Aorta (tissue), 5 donors: ENCODE measurements at regions of chr19 and their contacts with region 1.

Region 1: GRCh38 chr19:13952154-13953035 is at the start of gene DCAF15:
- DNase-seq: peak; percentile 99 to 100
- ATAC-seq: peak; percentile 99
- H3K4me3 ChIP-seq: peak within 1 kb of the TSS; percentile 88 to 92
- H3K27ac ChIP-seq: peak within 1 kb of the TSS in 1 of 2 donors; percentile 49
- H3K4me1 ChIP-seq: no peaks in the 10 kb centered on the region
- H3K27me3 ChIP-seq: no peaks in the 10 kb centered on the region
- total RNA-seq, gene DCAF15: 21.8 to 25.3 TPM

Region 2: DNA sequence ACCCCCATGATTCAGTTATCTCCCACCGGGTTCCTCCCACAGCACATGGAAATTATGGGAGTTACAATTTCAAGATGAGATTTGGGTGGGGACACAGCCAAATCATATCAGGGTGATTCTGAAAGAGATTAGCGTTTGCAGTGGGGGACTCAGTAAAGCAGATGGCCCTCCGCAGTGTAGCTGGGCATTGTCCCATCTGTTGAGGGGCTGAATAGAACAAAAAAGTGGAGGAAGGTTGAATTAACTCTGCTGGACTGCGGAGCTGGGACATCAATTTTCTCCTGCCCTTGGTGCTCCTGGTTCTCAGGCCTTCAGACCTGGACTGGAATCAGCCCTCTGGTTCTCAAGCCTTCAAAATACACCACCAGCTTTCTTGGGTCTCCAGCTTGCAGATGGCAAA is 390.9 kb before region 1 on chr19:
- intact Hi-C with region 1: no loop called
- DNase-seq: no peak
- ATAC-seq: no peak
- H3K4me3 ChIP-seq: no peak overlapping the region
- H3K27ac ChIP-seq: no peak overlapping the region
- H3K4me1 ChIP-seq: no peaks in the 10 kb centered on the region
- H3K27me3 ChIP-seq: peaks cover 0 to 2% of the 10 kb centered on the region in 2 donors

Region 3: DNA sequence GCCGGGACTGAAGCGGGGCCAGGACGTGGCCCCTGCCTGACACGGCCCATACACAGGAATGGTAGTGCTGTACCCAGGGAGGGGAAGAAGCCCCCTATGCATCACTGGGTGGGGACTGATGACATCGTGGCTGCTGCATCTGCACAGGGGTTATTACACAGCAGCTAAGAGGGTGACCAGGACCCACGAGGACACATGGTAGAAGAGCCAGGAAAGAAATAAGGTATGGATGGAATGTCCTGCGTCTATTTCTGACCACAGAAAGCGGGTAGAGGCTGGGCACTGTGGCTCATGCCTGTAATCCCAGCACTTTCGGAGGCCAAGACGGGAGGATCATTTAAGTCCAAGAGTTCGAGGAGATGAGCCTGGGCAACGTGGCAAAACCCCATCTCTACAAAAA is 24.1 kb after region 1 on chr19:
- intact Hi-C with region 1: loop called in 1 of 2 experiments (anchors 2 kb)
- DNase-seq: no peak
- ATAC-seq: no peak
- H3K4me3 ChIP-seq: no peak overlapping the region
- H3K27ac ChIP-seq: no peak overlapping the region
- H3K4me1 ChIP-seq: no peaks in the 10 kb centered on the region
- H3K27me3 ChIP-seq: no peaks in the 10 kb centered on the region

Region 4: DNA sequence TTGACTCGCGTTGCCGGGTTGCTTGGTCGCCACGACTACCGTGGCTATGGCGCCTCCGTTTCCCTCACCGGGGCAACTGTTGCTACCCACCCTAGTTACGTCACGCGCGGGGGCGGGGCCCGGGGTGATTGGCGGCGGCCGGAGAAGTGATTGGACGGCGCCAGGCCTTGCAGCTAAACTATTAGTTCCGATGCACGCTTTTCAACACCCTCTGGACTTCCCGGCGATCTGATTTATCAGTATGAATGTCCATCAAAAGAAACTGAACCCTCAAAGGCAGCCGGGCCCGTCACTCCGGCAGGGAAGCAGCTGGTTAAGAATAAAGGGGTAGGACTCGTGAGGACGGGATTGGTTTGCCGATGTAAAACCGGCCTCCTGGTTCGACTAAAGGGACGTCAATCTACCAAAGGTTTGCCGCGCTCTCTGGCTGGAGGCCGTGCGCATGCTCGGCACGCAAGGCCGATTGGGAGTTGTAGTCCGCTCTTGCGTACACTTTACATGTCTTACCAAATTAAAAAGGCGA is 53.9 kb after region 1 on chr19 and contains the start of gene RFX1:
- intact Hi-C with region 1: loop called (anchors 5 to 10 kb)
- DNase-seq: peak; percentile 100
- ATAC-seq: peak; percentile 95
- H3K4me3 ChIP-seq: peak within 1 kb of the TSS; percentile 64 to 98
- H3K27ac ChIP-seq: peak within 1 kb of the TSS; percentile 87 to 92
- H3K4me1 ChIP-seq: no peaks in the 10 kb centered on the region
- H3K27me3 ChIP-seq: no peaks in the 10 kb centered on the region
- total RNA-seq, gene RFX1: 11.6 to 17.7 TPM